Ovary (tissue), 10 donors: ENCODE measurements at regions of chr1 and their contacts with region 1.

Region 1: GRCh38 chr1:75724472-75725022 is at the start of gene ACADM:
- DNase-seq: peak; percentile 88 to 93 (median 91)
- H3K4me3 ChIP-seq: peak within 1 kb of the TSS; percentile 88
- H3K27ac ChIP-seq: peak within 1 kb of the TSS; percentile 85 to 88
- H3K4me1 ChIP-seq: peaks cover 6% of the 10 kb centered on the region
- H3K27me3 ChIP-seq: no peaks in the 10 kb centered on the region
- CTCF ChIP-seq: no peak
- EP300 ChIP-seq: no peak
- POLR2A ChIP-seq: peak; percentile 45
- total RNA-seq, gene ACADM: 38.9 to 59.3 (median 54.9) TPM

Region 2: DNA sequence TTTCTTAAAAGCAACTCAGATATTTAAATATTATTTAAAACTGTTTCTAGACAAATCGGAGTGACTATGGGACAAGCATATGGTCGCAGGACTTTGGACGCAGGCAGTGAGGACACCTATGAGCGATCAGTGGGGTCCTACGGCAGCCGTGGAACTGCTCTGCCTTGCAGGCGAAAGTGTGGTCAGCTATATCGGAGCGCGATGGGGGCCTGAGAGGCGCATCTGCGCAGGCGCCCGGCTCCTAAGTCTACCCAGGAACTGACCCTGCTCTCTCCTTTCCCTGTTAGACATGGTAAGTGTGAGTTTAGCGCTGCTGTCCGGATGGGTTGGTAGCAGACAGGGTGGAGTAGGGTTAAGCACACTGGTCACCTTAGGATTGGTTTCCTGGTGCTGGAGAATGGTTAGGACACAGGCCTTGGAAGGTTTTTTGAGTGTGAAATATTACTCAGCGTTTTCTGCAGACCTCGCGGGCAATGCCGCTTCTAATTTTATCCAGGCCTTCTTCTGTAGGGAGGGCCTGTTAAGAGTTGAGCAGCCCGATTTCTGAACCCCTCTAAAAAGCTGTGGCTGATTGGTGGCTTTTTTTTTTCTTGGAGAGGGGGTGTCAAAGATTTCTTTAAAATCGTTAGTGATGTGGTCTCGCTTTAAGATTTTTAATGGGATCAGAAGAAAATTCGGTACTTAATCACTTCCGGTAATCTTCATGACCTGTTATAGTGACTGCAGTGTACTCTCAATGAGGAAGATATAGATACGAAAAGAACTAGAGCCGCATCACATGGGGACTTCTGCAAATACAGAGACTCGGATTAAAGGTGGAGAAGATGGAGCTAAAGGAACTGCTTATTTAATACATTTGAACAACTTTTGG is 61.7 kb after region 1 on chr1 and contains the start of gene RABGGTB:
- intact Hi-C with region 1: loop called in 1 of 4 experiments (anchors 10 kb)
- DNase-seq: peak; percentile 93 to 96 (median 94)
- H3K4me3 ChIP-seq: peak within 1 kb of the TSS; percentile 56
- H3K27ac ChIP-seq: peak within 1 kb of the TSS in 1 of 2 donors; percentile 70
- H3K4me1 ChIP-seq: peaks cover 5% of the 10 kb centered on the region
- H3K27me3 ChIP-seq: no peaks in the 10 kb centered on the region
- CTCF ChIP-seq: no peak
- EP300 ChIP-seq: no peak
- POLR2A ChIP-seq: peak; percentile 39
- total RNA-seq, gene RABGGTB: 44.0 to 77.8 (median 57.3) TPM